Activated naive CD4-positive, alpha-beta T cell treated with anti-CD3 and anti-CD28 coated beads for 36 hours (primary cell): ENCODE measurements at regions of chr6 and their contacts with region 1.

Region 1: GRCh38 chr6:490251-491037 is 98.9 kb downstream of the IRF4 start:
- DNase-seq: peak; percentile 80
- H3K4me3 Mint-ChIP-seq: peak overlapping the region; percentile 41
- H3K27ac Mint-ChIP-seq: peak overlapping the region; percentile 95
- H3K4me1 Mint-ChIP-seq: peaks cover 94% of the 10 kb centered on the region
- H3K27me3 Mint-ChIP-seq: no peaks in the 10 kb centered on the region

Region 2: DNA sequence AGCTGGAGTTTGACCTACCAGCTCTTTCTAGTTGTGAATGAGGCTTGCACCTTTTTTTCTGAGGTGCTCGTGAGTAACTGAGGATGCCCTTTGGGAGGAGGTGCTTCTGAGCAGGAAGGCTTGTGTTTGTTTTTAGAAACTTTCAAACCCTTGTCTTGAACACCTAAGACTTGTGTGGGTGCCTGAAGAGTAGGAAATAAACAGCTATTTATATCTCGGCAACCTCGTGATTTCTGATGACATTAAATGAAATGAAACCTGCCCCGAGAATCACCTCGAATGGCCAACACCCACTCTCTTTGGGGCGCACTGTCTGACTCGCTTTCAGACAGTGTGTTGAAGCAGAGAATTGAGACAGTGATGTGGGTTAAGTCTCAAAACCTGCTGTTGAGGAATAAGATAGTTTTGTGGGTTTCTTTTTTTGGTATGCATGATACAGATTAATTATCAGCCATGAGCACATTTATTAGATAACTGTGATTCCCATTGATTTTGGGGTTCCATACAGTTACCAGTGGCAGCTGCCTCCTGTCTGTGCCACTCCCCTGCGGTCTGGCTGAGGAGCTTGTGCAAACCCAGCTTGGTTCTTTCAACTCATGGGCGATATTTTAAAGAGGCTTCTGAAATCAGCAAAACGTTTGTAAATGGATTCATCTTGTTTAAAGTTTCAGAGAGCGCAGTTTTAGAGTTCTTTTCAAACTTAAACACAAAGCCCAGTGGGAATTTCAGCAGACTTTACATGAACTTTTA is 90.5 kb before region 1 on chr6:
- CTCF ChIA-PET with region 1: interaction called, 3 read pairs
- intact Hi-C with region 1: loop called (anchors 1 kb)
- DNase-seq: peak; percentile 73
- H3K4me3 Mint-ChIP-seq: peak overlapping the region; percentile 56
- H3K27ac Mint-ChIP-seq: peak overlapping the region; percentile 89
- H3K4me1 Mint-ChIP-seq: peaks cover 91% of the 10 kb centered on the region
- H3K27me3 Mint-ChIP-seq: no peaks in the 10 kb centered on the region

Region 3: GRCh38 chr6:474453-475185 is 15.8 kb before region 1 on chr6:
- CTCF ChIA-PET with region 1: interaction called, 3 read pairs
- intact Hi-C with region 1: loop called (anchors 1 kb)
- DNase-seq: peak; percentile 95
- H3K4me3 Mint-ChIP-seq: peak overlapping the region; percentile 62
- H3K27ac Mint-ChIP-seq: peak overlapping the region; percentile 76
- H3K4me1 Mint-ChIP-seq: peaks cover 70% of the 10 kb centered on the region
- H3K27me3 Mint-ChIP-seq: no peaks in the 10 kb centered on the region

Region 4: GRCh38 chr6:524803-525202 is 34.4 kb after region 1 on chr6:
- CTCF ChIA-PET with region 1: no interaction called
- intact Hi-C with region 1: loop called (anchors 1 kb)
- DNase-seq: peak; percentile 75
- H3K4me3 Mint-ChIP-seq: peak overlapping the region; percentile 11
- H3K27ac Mint-ChIP-seq: peak overlapping the region; percentile 18
- H3K4me1 Mint-ChIP-seq: peaks cover 25% of the 10 kb centered on the region
- H3K27me3 Mint-ChIP-seq: no peaks in the 10 kb centered on the region

Region 5: GRCh38 chr6:558089-558488 is 67.6 kb after region 1 on chr6:
- CTCF ChIA-PET with region 1: interaction called, 3 read pairs
- intact Hi-C with region 1: loop called (anchors 1 kb)
- DNase-seq: no peak
- H3K4me3 Mint-ChIP-seq: no peak overlapping the region
- H3K27ac Mint-ChIP-seq: peak overlapping the region; percentile 59
- H3K4me1 Mint-ChIP-seq: peaks cover 51% of the 10 kb centered on the region
- H3K27me3 Mint-ChIP-seq: no peaks in the 10 kb centered on the region

Region 6: DNA sequence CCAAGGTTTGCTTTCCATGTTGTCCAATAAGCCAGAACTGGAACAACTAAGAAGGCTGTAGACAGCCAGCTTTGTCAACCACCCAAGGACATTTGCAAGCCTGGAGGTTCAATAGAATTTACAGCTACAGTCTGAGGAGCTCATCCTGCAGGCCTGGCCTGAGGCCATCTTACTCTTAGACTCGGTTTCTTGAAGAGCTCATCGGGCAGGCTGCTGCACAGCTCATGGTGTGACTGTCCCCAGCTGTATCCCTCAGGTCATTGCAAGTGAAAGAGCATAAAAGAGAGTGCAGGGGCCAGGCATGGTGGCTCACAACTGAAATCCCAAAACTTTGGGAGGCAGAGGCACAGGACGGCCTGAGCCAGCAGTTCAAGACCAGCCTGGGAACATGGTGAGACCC is 724.6 kb after region 1 on chr6:
- CTCF ChIA-PET with region 1: no interaction called
- intact Hi-C with region 1: no loop called
- DNase-seq: no peak
- H3K4me3 Mint-ChIP-seq: no peak overlapping the region
- H3K27ac Mint-ChIP-seq: no peak overlapping the region
- H3K4me1 Mint-ChIP-seq: no peaks in the 10 kb centered on the region
- H3K27me3 Mint-ChIP-seq: peaks cover 3% of the 10 kb centered on the region